Endothelial cell of umbilical vein (primary cell): ENCODE measurements at regions of chr18 and their contacts with region 1.

Region 1: GRCh38 chr18:49510393-49511115 is 23.5 kb upstream of the C18orf32 start:
- DNase-seq: peak; percentile 51
- H3K4me3 ChIP-seq: no peak overlapping the region
- H3K27ac ChIP-seq: no peak overlapping the region
- H3K4me1 ChIP-seq: no peaks in the 10 kb centered on the region
- H3K27me3 ChIP-seq: peaks cover 3 to 4% of the 10 kb centered on the region in 2 experiments
- CTCF ChIP-seq: peak; percentile 74 to 81
- POLR2A ChIP-seq: no peak

Region 2: DNA sequence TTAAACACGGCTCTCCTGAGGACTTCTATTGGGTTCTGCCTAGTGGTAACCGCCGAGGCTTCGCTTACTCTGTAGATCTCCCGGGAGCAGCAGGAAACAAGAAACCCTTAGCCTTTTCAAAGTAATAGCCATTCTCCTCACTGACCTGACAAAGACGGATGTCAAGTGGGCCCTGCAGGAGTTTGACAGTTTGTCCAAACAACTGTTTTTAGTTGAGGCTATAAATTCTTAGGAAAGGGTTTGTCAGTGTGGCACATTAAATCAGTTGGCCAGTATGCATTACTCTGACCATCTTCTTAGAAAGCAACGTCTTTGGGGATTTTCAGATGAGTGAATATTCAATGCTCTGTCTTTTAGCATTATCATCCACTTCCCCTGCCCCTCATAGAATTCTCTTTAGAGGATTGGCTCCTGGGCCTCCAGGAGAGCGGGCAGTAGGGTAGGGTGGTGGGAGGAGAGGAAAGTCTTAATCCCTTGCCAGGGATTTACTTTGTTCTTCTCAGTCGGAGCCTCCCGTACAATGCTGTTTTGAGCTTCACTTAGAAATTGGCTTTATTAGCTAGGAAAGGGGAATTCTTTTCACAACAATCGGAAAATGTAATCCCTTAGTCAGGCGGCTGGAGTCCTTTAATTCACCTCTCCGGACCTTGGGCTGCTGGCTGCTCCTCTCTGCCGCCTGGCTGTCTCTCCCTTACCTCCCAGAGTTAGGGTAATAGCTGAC is 10.2 kb before region 1 on chr18:
- CTCF ChIA-PET with region 1: interaction called, 15 read pairs
- POLR2A ChIA-PET with region 1: no interaction called
- dilution Hi-C with region 1: no loop called
- intact Hi-C with region 1: no loop called
- DNase-seq: no peak
- H3K4me3 ChIP-seq: no peak overlapping the region
- H3K27ac ChIP-seq: no peak overlapping the region
- H3K4me1 ChIP-seq: no peaks in the 10 kb centered on the region
- H3K27me3 ChIP-seq: peaks cover 0 to 4% of the 10 kb centered on the region in 2 experiments
- CTCF ChIP-seq: no peak
- POLR2A ChIP-seq: no peak

Region 3: GRCh38 chr18:49555641-49556040 is 45.1 kb after region 1 on chr18:
- CTCF ChIA-PET with region 1: interaction called, 19 read pairs
- POLR2A ChIA-PET with region 1: no interaction called
- dilution Hi-C with region 1: no loop called
- intact Hi-C with region 1: loop called (anchors 1 kb)
- DNase-seq: no peak
- H3K4me3 ChIP-seq: no peak overlapping the region
- H3K27ac ChIP-seq: no peak overlapping the region
- H3K4me1 ChIP-seq: no peaks in the 10 kb centered on the region
- H3K27me3 ChIP-seq: peaks cover 5% of the 10 kb centered on the region in 2 experiments
- CTCF ChIP-seq: no peak
- POLR2A ChIP-seq: no peak

Region 4: GRCh38 chr18:49728542-49728941 is 218.0 kb after region 1 on chr18:
- CTCF ChIA-PET with region 1: interaction called, 7 read pairs
- POLR2A ChIA-PET with region 1: no interaction called
- dilution Hi-C with region 1: no loop called
- intact Hi-C with region 1: loop called (anchors 5 kb)
- DNase-seq: peak; percentile 54
- H3K4me3 ChIP-seq: no peak overlapping the region
- H3K27ac ChIP-seq: no peak overlapping the region
- H3K4me1 ChIP-seq: peaks cover 33% of the 10 kb centered on the region
- H3K27me3 ChIP-seq: no peaks in the 10 kb centered on the region
- CTCF ChIP-seq: peak; percentile 84 to 87
- POLR2A ChIP-seq: no peak

Region 5: GRCh38 chr18:49784427-49785185 is 274.1 kb after region 1 on chr18:
- CTCF ChIA-PET with region 1: interaction called, 27 read pairs
- POLR2A ChIA-PET with region 1: no interaction called
- dilution Hi-C with region 1: no loop called
- intact Hi-C with region 1: loop called (anchors 1 kb)
- DNase-seq: no peak
- H3K4me3 ChIP-seq: no peak overlapping the region
- H3K27ac ChIP-seq: no peak overlapping the region
- H3K4me1 ChIP-seq: peaks cover 8% of the 10 kb centered on the region
- H3K27me3 ChIP-seq: no peaks in the 10 kb centered on the region
- CTCF ChIP-seq: no peak
- POLR2A ChIP-seq: no peak

Region 6: GRCh38 chr18:50356036-50356945 is 845.7 kb after region 1 on chr18:
- CTCF ChIA-PET with region 1: interaction called, 12 read pairs
- POLR2A ChIA-PET with region 1: no interaction called
- dilution Hi-C with region 1: no loop called
- intact Hi-C with region 1: no loop called
- DNase-seq: peak; percentile 30
- H3K4me3 ChIP-seq: no peak overlapping the region
- H3K27ac ChIP-seq: no peak overlapping the region
- H3K4me1 ChIP-seq: peaks cover 4% of the 10 kb centered on the region
- H3K27me3 ChIP-seq: peaks cover 10 to 14% of the 10 kb centered on the region in 2 experiments
- CTCF ChIP-seq: peak in 1 of 2 donors; percentile 4
- POLR2A ChIP-seq: no peak